ENCODE measurements at regions of chr4 and their contacts with region 1.

Region 1: GRCh38 chr4:112031712-112032328 is 113.4 kb upstream of the FAM241A start:
- DNase-seq: no peak
- H3K4me3 ChIP-seq: no peak overlapping the region
- CTCF ChIP-seq: peak; percentile 57

Region 2: GRCh38 chr4:111631215-111631999 is 400.4 kb before region 1 on chr4:
- CTCF ChIA-PET with region 1: interaction called, 13 read pairs
- POLR2A ChIA-PET with region 1: no interaction called
- DNase-seq: no peak
- H3K4me3 ChIP-seq: no peak overlapping the region
- CTCF ChIP-seq: peak; percentile 33

Region 3: GRCh38 chr4:111854494-111855087 is 177.2 kb before region 1 on chr4:
- CTCF ChIA-PET with region 1: interaction called, 17 read pairs
- POLR2A ChIA-PET with region 1: no interaction called
- DNase-seq: no peak
- H3K4me3 ChIP-seq: no peak overlapping the region
- CTCF ChIP-seq: peak; percentile 53

Region 4: DNA sequence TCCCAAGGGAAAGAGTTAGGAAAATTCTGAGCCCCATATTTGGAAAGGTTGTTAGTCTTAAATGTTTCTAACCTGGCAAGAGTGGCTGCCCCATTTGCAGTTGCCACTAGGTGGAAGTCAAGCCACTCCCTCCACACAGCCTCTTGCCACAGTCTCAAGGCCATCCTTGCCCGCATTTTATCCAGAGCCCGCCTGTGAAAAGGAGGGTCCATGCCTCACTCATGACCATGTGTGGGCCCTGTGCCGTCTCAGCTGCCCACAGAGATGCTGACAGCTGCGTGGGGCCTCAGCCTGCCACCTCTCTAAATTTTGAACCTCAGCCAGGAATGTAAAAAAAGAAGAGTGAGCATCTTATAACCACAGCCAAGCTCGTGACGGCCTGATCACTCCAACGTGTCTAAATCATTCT is 88.0 kb before region 1 on chr4:
- CTCF ChIA-PET with region 1: interaction called, 25 read pairs
- POLR2A ChIA-PET with region 1: no interaction called
- DNase-seq: no peak
- H3K4me3 ChIP-seq: no peak overlapping the region
- CTCF ChIP-seq: peak; percentile 43

Region 5: GRCh38 chr4:112015960-112016359 is 15.9 kb before region 1 on chr4:
- CTCF ChIA-PET with region 1: interaction called, 12 read pairs
- POLR2A ChIA-PET with region 1: no interaction called
- DNase-seq: no peak
- H3K4me3 ChIP-seq: no peak overlapping the region
- CTCF ChIP-seq: no peak

Region 6: GRCh38 chr4:112055100-112055499 is 23.3 kb after region 1 on chr4:
- CTCF ChIA-PET with region 1: interaction called, 14 read pairs
- POLR2A ChIA-PET with region 1: no interaction called
- DNase-seq: no peak
- H3K4me3 ChIP-seq: no peak overlapping the region
- CTCF ChIP-seq: no peak